Activated T-helper 1 cell treated with anti-CD3 and anti-CD28 coated beads, Interleukin-12 subunit alpha, Interleukin-12 subunit beta, Interleukin-2, Interleukin-4 antibody, amounts not matched to agents 30 ng/mL and 10 ng/mL and 1 ng/mL, durations not matched to agents 14 hours and 24 hours and 36 hours (primary cell): ENCODE measurements at regions of chr1 and their contacts with region 1.

Region 1: GRCh38 chr1:209860293-209860881 is 32.6 kb downstream of the UTP25 start:
- DNase-seq: peak; percentile 50
- H3K4me3 Mint-ChIP-seq: no peak overlapping the region
- H3K27ac Mint-ChIP-seq: no peak overlapping the region
- H3K4me1 Mint-ChIP-seq: no peaks in the 10 kb centered on the region
- H3K27me3 Mint-ChIP-seq: peaks cover 18% of the 10 kb centered on the region

Region 2: DNA sequence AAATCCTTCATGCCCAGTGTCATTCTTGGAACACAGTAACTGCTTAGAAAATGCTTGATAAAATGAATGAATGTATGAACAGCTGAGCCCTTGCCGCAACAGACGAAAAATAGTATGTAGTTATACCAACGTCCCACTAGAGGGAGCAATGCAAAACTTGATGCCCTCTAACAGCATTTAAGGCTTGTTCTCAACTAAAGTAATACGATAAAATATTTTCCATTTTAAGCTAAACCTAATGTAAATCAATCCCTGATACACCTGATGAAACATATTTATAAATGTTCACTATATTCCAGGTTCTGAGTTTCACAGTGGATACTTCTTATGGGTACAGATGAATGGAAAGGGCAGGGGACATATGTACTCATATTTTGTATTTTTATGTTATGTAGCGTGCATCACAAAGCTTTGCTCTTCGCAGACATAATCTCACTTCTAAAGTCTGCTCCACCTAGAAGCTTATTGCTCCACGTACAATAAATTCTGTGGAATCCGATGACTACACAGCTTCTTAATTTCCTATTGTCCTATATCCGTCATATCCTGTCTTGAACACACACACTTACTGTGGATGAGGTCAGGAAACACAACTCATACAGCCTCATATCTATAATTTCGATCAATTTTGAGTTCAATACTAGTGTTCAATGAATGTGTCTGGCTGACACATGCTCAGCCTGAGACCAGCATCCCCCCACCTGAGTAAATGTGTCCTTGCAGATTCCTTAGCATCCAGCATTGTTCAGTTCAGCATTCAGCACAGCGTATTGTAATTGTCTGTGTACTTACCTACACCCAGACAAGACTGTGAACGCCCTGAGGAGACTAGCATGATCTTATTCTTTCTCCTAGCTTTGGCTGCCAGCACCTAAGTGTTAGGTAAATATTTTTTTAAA is 37.0 kb before region 1 on chr1:
- intact Hi-C with region 1: no loop called
- DNase-seq: no peak
- H3K4me3 Mint-ChIP-seq: peak overlapping the region; percentile 1
- H3K27ac Mint-ChIP-seq: no peak overlapping the region
- H3K4me1 Mint-ChIP-seq: peaks cover 27% of the 10 kb centered on the region
- H3K27me3 Mint-ChIP-seq: peaks cover 30% of the 10 kb centered on the region

Region 3: GRCh38 chr1:209989525-209989924 is 129.1 kb after region 1 on chr1:
- intact Hi-C with region 1: loop called (anchors 1 kb)
- DNase-seq: no peak
- H3K4me3 Mint-ChIP-seq: no peak overlapping the region
- H3K27ac Mint-ChIP-seq: no peak overlapping the region
- H3K4me1 Mint-ChIP-seq: no peaks in the 10 kb centered on the region
- H3K27me3 Mint-ChIP-seq: peaks cover 3% of the 10 kb centered on the region

Region 4: DNA sequence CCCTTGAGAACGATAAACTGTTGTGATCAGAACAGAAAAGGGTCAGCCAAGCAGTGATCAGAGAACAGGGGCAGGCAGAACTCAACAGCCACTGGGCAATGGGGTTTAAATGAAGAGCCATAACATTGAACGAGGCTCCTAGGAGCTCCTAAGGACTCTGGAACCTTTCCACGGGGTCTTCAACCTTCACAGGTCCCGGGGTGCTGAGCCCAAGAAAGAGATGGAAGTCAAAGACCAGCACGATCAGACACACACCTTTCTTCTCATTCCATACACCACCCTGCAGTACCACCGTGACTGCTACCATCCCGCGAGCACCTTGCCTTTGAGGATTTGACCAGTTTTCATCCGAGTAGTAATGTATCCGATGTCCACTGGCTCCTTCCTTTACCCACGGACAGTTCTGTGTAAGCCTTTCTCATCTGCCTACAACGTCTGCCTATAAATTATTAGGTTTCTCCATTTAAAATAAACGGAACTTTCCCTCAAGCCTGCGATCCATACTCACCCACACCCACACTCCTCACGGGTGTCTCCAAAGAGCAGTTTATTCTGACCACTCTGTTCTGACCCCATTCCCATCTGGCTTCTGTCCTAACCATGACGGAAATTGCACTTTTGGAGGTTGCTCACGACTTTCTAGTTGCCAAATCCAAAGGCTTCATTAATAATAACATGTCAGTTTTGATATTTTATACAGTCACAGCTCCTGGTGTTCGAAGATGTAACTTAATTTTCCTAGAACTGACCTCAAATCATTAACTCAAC is 451.5 kb after region 1 on chr1:
- intact Hi-C with region 1: loop called (anchors 1 kb)
- DNase-seq: no peak
- H3K4me3 Mint-ChIP-seq: no peak overlapping the region
- H3K27ac Mint-ChIP-seq: no peak overlapping the region
- H3K4me1 Mint-ChIP-seq: peaks cover 6% of the 10 kb centered on the region
- H3K27me3 Mint-ChIP-seq: peaks cover 38% of the 10 kb centered on the region